CD8-positive, alpha-beta T cell (primary cell): ENCODE measurements at regions of chr11 and their contacts with region 1.

Region 1: GRCh38 chr11:87778357-87778756 is 396.9 kb downstream of the RAB38 start:
- DNase-seq: no peak
- ATAC-seq: no peak
- H3K4me3 ChIP-seq: no peak overlapping the region
- H3K4me3 Mint-ChIP-seq: no peak overlapping the region
- H3K27ac ChIP-seq: no peak overlapping the region
- H3K27ac Mint-ChIP-seq: no peak overlapping the region
- H3K4me1 ChIP-seq: no peaks in the 10 kb centered on the region
- H3K4me1 Mint-ChIP-seq: no peaks in the 10 kb centered on the region
- H3K27me3 ChIP-seq: no peaks in the 10 kb centered on the region
- H3K27me3 Mint-ChIP-seq: no peaks in the 10 kb centered on the region
- CTCF ChIP-seq: no peak

Region 2: GRCh38 chr11:87812571-87813365 is 34.4 kb after region 1 on chr11:
- CTCF ChIA-PET with region 1: no interaction called
- POLR2A ChIA-PET with region 1: no interaction called
- intact Hi-C with region 1: loop called in 1 of 2 experiments (anchors 1 kb)
- DNase-seq: no peak
- ATAC-seq: no peak
- H3K4me3 ChIP-seq: no peak overlapping the region
- H3K4me3 Mint-ChIP-seq: no peak overlapping the region
- H3K27ac ChIP-seq: no peak overlapping the region
- H3K27ac Mint-ChIP-seq: no peak overlapping the region
- H3K4me1 ChIP-seq: no peaks in the 10 kb centered on the region
- H3K4me1 Mint-ChIP-seq: no peaks in the 10 kb centered on the region
- H3K27me3 ChIP-seq: no peaks in the 10 kb centered on the region
- H3K27me3 Mint-ChIP-seq: no peaks in the 10 kb centered on the region
- CTCF ChIP-seq: no peak

Region 3: DNA sequence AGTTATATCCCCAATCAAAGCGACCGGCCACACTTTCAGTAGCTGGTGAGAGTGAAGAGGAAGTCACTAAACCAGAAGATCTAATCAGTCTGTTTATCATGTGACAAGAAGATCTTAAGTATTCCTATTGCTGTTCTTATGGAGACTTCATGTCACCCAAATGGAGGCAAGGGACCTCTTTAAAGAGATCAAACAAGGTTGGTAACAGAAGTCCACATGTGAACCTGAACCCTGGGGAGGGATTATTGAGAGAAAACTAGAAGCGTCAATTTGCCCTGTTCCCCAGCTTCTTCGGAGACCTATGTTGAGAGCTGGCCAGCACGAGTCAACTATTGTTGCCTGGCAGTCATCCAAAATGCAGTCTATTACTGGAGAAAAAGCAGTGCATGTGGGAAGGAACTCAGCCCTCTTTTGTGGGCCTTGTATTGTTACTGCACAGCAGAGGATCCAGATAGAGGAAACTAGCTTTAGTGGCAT is 636.1 kb after region 1 on chr11:
- CTCF ChIA-PET with region 1: no interaction called
- POLR2A ChIA-PET with region 1: no interaction called
- intact Hi-C with region 1: no loop called
- DNase-seq: peak in 4 of 9 experiments; percentile 16 to 60 (median 33)
- ATAC-seq: peak; percentile 53
- H3K4me3 ChIP-seq: peak overlapping the region; percentile 4 to 14
- H3K4me3 Mint-ChIP-seq: peak overlapping the region; percentile 58
- H3K27ac ChIP-seq: peak overlapping the region in 1 of 2 experiments; percentile 39
- H3K27ac Mint-ChIP-seq: no peak overlapping the region
- H3K4me1 ChIP-seq: peaks cover 29% of the 10 kb centered on the region
- H3K4me1 Mint-ChIP-seq: peaks cover 27% of the 10 kb centered on the region
- H3K27me3 ChIP-seq: no peaks in the 10 kb centered on the region
- H3K27me3 Mint-ChIP-seq: no peaks in the 10 kb centered on the region
- CTCF ChIP-seq: no peak